Mammary epithelial cell (primary cell): ENCODE measurements at regions of chr15 and their contacts with region 1.

Region 1: GRCh38 chr15:89171136-89172072 is 50.0 kb downstream of the RLBP1 start:
- DNase-seq: no peak
- H3K4me3 ChIP-seq: no peak overlapping the region
- H3K27ac ChIP-seq: no peak overlapping the region
- H3K4me1 ChIP-seq: peaks cover 30% of the 10 kb centered on the region
- H3K27me3 ChIP-seq: no peaks in the 10 kb centered on the region
- CTCF ChIP-seq: peak; percentile 73 to 86

Region 2: GRCh38 chr15:88904624-88905327 is 266.6 kb before region 1 on chr15:
- CTCF ChIA-PET with region 1: no interaction called
- dilution Hi-C with region 1: loop called (anchors 10 kb)
- in situ Hi-C with region 1: loop called (anchors 10 kb)
- intact Hi-C with region 1: no loop called
- DNase-seq: peak; percentile 49
- H3K4me3 ChIP-seq: no peak overlapping the region
- H3K27ac ChIP-seq: no peak overlapping the region
- H3K4me1 ChIP-seq: peaks cover 3% of the 10 kb centered on the region
- H3K27me3 ChIP-seq: no peaks in the 10 kb centered on the region
- CTCF ChIP-seq: peak; percentile 97 to 98

Region 3: DNA sequence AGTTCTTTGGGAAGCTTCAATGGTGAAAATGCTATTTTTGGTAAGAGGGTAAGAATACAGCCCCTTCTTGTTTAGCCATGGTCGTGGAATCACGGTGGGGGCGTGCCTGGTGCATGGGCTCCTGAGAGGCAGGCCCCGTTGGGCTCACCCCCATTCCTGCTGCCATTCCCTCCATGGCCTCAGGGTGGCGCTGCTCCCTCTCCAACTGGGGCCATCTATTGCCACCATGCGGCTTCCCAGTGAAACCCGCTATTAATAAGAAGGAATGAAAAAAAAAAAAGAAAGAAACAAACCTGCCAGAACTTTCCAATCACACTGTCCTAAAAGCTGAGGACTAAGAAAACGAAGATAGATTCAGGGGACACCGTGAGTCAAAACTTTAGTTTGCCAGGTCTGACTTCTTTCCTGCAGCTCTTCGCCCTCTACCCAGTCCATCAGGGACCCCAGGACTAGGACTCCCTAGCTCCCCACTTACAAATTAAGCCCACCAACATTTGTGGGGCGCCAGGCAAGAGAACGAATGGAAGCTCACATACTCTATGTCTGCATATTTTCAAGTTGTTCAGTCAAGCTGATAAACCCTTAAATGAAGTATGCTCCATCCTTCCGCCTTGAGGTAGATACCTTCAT is 113.8 kb before region 1 on chr15:
- CTCF ChIA-PET with region 1: no interaction called
- dilution Hi-C with region 1: loop called (anchors 5 kb)
- in situ Hi-C with region 1: loop called (anchors 5 kb)
- intact Hi-C with region 1: loop called (anchors 1 kb)
- DNase-seq: peak; percentile 56
- H3K4me3 ChIP-seq: no peak overlapping the region
- H3K27ac ChIP-seq: no peak overlapping the region
- H3K4me1 ChIP-seq: no peaks in the 10 kb centered on the region
- H3K27me3 ChIP-seq: no peaks in the 10 kb centered on the region
- CTCF ChIP-seq: peak; percentile 97 to 99

Region 4: DNA sequence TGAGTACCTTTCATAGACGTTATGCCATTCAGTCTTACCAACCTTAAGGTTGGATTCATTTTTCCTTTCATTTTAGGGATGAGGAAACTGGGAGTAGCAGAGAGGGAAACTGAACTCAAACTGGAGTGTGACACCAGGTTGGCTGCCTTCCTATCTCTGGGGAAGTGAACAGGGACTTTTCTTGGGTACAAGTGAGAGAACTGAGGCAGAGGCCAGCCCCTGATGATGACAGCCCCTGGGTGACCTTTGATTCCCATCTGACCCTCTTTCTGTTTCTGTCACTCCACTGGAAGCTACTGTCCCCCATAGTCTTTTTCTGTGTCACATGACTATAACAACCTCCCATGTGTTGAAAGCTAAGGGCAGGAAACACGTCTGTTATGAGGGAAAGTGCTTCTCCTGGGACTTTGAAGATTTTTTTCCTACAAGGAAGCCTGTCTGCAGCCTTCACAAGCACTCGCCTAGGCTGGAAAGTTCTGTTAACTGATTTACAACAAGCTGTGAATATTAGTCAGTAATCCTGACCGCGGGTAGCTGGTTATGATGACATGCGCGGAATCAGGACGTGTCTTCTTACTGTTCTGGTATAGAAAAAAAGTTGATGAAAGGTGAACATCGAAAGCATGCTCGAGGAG is 51.8 kb before region 1 on chr15:
- CTCF ChIA-PET with region 1: no interaction called
- dilution Hi-C with region 1: loop called (anchors 5 kb)
- in situ Hi-C with region 1: no loop called
- intact Hi-C with region 1: no loop called
- DNase-seq: no peak
- H3K4me3 ChIP-seq: no peak overlapping the region
- H3K27ac ChIP-seq: no peak overlapping the region
- H3K4me1 ChIP-seq: peaks cover 29% of the 10 kb centered on the region
- H3K27me3 ChIP-seq: no peaks in the 10 kb centered on the region
- CTCF ChIP-seq: no peak